Activated naive CD4-positive, alpha-beta T cell treated with anti-CD3 and anti-CD28 coated beads for 36 hours (primary cell): ENCODE measurements at regions of chr1 and their contacts with region 1.

Region 1: DNA sequence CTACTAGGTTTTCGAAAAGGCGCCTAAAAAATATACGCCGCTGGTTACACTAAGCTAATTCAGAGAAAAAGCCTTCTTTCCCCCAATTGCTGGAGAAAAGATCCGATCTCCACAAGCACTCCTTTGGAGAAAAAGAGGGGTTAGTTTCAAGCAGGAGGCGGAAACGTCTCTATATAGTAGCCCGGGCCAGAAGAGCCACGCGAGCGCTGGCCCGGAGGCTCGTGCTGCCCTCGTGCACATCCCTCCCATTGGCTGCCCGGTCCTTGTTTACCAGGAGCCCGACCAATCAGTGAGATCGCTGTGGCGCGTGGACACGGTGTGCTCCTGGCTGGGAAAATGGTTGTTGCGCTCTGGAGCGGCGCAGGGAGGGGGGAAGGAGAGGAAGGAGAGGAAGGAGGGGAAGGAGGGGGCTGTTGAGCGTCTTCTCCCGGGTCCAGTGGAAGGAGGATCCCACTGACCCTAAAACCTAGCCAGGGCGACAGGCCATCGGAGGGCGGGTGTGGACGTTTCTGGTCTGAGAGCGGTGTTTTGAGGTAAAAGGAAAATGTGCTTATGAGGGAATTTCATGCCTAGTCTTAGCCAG is at the start of gene TXNIP:
- DNase-seq: peak; percentile 97
- H3K4me3 Mint-ChIP-seq: peak within 1 kb of the TSS; percentile 88
- H3K27ac Mint-ChIP-seq: peak within 1 kb of the TSS; percentile 97
- H3K4me1 Mint-ChIP-seq: peaks cover 61% of the 10 kb centered on the region
- H3K27me3 Mint-ChIP-seq: no peaks in the 10 kb centered on the region
- total RNA-seq, gene TXNIP: 86.0 to 91.1 TPM

Region 2: GRCh38 chr1:145690624-145691035 is 305.9 kb before region 1 on chr1:
- CTCF ChIA-PET with region 1: no interaction called
- intact Hi-C with region 1: no loop called
- DNase-seq: peak; percentile 65
- H3K4me3 Mint-ChIP-seq: no peak overlapping the region
- H3K27ac Mint-ChIP-seq: no peak overlapping the region
- H3K4me1 Mint-ChIP-seq: peaks cover 22% of the 10 kb centered on the region
- H3K27me3 Mint-ChIP-seq: no peaks in the 10 kb centered on the region

Region 3: DNA sequence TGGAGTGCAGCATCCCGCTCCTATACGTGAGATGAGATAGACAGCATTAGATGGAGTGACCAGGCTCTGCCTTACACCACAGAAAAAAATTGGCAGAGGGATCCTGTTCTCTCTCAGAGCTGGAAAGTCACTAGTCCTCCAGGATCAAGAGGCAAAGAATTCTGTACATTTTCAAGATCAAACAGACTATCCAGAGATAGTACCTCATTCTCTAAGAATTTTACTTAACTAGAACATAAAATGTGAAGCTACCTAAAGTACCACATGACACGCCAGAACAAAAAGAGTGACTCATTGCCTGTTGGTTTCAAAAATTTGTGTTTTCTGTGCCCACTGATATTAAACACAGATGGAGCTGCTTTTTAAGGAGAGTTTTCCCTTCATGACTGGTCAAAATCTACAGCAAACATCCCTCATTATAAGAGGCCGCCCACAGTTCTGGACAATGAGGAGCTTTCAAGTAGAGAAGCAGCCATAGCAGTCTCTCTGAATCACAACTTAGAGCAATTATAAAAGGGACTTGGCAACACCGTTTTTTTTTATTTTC is 245.0 kb before region 1 on chr1:
- CTCF ChIA-PET with region 1: no interaction called
- intact Hi-C with region 1: no loop called
- DNase-seq: no peak
- H3K4me3 Mint-ChIP-seq: no peak overlapping the region
- H3K27ac Mint-ChIP-seq: no peak overlapping the region
- H3K4me1 Mint-ChIP-seq: peaks cover 7% of the 10 kb centered on the region
- H3K27me3 Mint-ChIP-seq: no peaks in the 10 kb centered on the region

Region 4: DNA sequence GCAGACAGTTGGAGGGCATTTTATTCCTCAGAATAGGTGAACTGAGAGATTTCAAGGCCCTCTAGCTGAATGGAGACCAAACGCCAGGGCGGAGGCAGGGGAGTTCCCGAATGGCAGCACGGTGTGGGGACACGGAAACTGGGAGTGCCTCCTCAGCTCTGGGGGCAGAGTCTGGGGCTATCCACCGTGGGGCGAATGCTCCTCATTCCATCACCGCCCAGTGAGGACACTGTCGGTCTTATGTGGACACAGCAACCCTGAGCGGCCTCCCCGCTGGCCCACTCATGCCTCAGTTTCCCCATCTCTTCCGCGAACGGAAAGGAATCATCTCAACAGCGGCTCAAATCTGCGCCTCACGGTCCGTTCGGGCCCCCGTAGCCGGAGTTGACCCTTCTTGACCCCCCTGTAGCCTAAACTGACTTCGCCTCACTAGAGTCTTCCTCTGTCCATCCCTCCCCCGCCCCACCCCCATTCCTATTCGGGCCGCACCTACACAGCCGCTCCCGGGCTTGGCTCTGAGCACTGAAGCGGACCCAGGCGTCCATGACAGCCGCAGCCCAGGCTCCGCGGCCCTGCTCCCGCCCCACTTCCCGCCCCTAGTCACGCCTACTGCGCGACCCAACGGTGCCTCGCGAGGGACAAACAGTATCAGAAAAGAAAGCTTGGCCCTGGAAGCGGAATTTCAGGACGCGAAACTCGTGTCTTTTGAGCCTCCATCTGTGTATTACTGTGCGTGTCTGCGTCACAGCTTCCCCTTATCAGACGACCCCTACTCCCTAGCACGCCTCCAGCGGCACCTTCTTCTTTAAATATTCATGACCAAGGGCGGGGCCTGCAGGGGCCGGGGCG is 78.2 kb before region 1 on chr1 and contains the start of gene PEX11B:
- CTCF ChIA-PET with region 1: interaction called, 5 read pairs
- intact Hi-C with region 1: loop called (anchors 1 kb)
- DNase-seq: peak; percentile 94
- H3K4me3 Mint-ChIP-seq: peak within 1 kb of the TSS; percentile 89
- H3K27ac Mint-ChIP-seq: peak within 1 kb of the TSS; percentile 93
- H3K4me1 Mint-ChIP-seq: peaks cover 39% of the 10 kb centered on the region
- H3K27me3 Mint-ChIP-seq: no peaks in the 10 kb centered on the region
- total RNA-seq, gene PEX11B: 18.0 to 19.0 TPM

Region 5: DNA sequence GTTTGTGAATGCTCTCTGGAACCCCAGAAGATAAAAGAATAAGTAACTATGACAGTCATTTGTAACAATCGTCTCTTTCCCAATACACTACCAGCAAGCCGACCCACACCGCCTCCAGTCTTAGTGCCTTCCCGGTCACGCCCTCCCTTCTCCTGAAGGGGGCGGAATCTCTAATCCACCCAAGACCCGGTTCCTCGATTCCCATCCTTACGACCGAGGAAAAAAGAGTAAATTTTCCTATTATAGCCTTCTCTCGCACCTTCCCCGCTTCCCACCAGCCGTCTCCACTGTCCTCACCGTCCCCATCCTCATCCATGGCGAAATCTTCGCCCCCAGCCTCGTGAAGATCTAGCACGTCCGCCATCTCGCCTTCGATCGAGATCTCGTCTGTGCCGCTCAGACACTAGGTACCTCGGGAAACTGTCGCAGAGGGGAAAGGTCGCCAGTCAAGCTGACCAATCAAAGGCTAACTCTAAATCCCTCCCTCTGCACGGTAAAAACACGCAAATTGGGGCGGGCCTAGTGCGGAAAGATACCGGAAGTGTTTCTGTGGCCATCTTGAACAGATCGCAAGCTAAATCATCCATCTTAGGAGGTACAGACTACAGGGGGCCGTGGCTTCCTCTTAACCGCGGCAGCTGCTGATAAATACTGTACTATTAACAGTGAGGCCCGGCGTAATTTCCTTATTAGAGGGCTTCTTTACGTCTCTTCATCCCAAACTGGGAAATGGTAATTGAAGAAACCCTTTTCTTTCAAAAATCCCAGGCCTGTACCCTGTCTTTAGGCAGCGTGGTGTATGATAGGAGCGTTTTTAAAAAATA is 69.2 kb before region 1 on chr1 and contains the start of gene RBM8A:
- CTCF ChIA-PET with region 1: no interaction called
- intact Hi-C with region 1: loop called (anchors 1 kb)
- DNase-seq: peak; percentile 99
- H3K4me3 Mint-ChIP-seq: no peak within 1 kb of the TSS
- H3K27ac Mint-ChIP-seq: no peak within 1 kb of the TSS
- H3K4me1 Mint-ChIP-seq: peaks cover 14% of the 10 kb centered on the region
- H3K27me3 Mint-ChIP-seq: no peaks in the 10 kb centered on the region
- total RNA-seq, gene RBM8A: 241 to 242 TPM

Region 6: DNA sequence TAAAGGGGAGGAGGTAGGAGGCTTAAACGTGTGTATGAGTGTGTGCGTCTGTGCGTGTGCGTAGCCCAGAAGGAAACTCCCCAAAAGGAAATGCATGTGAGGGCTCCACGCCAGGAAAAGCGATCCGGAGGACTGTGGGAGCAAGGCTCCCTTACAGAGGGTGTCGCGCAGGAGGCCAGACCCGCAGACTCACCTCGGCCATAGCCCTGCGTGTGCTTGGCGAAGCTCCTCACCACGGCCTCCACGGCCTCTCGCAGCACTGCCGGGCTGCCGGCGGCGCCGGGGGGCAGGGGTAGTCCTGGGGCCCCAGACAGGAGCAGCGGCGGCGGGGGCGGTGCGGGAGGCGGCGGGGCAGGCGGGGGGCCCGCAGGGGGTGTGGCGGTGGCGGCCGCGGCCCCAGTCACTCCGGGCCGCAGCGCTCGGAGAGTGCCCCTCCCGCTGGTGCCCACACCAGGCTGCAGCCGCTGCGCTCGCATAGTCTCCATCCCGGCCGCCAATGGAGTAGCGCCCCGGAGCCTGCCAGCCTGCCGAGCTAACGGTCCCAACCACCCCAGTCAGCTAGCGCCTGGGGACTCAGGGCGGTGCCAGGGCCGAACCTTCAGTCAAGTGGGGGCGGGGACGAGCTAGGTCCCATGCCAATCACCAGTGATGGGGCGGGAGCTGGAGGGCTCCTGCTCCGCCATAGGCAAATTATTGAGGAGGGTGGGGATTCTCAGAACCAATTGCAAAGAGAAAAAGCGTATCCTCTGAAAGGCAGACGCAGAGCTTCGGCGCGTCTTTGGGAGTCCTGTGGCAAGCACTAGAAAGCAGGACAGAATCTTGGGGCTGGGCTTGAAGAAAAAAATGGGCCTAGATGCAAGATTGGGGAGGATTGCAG is 38.8 kb before region 1 on chr1 and contains the start of gene LIX1L:
- CTCF ChIA-PET with region 1: interaction called, 7 read pairs
- intact Hi-C with region 1: loop called (anchors 1 kb)
- DNase-seq: peak; percentile 98
- H3K4me3 Mint-ChIP-seq: peak within 1 kb of the TSS; percentile 83
- H3K27ac Mint-ChIP-seq: peak within 1 kb of the TSS; percentile 83
- H3K4me1 Mint-ChIP-seq: peaks cover 56% of the 10 kb centered on the region
- H3K27me3 Mint-ChIP-seq: no peaks in the 10 kb centered on the region
- total RNA-seq, gene LIX1L: 43.6 to 44.3 TPM

Region 7: DNA sequence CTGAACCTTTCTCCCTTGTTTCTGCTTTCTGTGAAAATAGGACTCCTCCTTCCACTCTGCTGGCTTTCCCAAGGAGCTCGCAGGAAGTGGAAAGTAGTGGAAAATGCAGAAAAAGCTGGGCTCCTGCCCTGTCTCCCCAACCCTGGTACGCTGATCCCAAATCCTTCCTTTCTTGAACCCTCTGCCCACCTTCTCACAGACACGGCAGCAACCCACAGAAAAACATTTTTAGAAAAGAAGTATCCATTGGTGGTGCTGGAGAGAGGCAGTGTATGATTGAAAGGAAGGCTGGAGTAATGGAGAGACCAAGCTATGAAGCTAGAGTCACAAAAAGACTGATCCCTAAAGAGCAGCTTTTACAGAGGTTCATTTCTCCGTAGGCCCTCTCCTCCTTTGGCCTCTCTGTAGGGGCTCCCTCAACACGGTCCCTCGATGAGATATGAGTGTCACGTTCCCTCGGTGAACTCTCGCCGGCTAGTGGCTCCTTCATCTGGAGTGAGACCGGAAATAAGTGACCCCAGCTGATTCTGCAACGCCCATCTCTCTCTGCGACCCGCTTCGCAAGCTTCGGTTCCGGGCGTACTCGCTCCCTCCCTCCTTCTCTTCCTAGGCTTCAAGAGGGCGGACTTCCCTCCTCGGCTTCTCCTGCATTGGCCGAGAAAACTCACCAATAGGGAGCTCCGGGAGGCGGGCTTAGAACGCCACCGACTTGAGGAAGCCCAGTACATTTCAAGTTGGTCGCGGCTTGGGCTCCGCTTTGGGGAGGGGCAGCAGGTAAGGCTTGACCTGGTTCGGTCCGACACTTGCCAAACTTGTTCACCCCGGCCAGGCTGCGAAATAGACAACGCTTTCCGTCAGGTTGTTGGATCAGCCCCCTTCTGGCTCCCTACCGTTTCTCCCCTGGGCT is 32.3 kb before region 1 on chr1 and contains the starts of genes ANKRD34A and POLR3GL:
- CTCF ChIA-PET with region 1: interaction called, 7 read pairs
- intact Hi-C with region 1: loop called (anchors 1 kb)
- DNase-seq: peak; percentile 98
- H3K4me3 Mint-ChIP-seq: peak within 1 kb of the TSS; percentile 97
- H3K27ac Mint-ChIP-seq: peak within 1 kb of the TSS; percentile 84
- H3K4me1 Mint-ChIP-seq: peaks cover 35% of the 10 kb centered on the region
- H3K27me3 Mint-ChIP-seq: no peaks in the 10 kb centered on the region
- total RNA-seq, gene ANKRD34A: 3.7 to 4.3 TPM
- total RNA-seq, gene POLR3GL: 32.0 to 34.0 TPM

Region 8: GRCh38 chr1:146007506-146008133 is 11.1 kb after region 1 on chr1:
- CTCF ChIA-PET with region 1: interaction called, 21 read pairs
- intact Hi-C with region 1: loop called (anchors 1 kb)
- DNase-seq: no peak
- H3K4me3 Mint-ChIP-seq: no peak overlapping the region
- H3K27ac Mint-ChIP-seq: peak overlapping the region; percentile 93
- H3K4me1 Mint-ChIP-seq: peaks cover 38% of the 10 kb centered on the region
- H3K27me3 Mint-ChIP-seq: no peaks in the 10 kb centered on the region

Region 9: DNA sequence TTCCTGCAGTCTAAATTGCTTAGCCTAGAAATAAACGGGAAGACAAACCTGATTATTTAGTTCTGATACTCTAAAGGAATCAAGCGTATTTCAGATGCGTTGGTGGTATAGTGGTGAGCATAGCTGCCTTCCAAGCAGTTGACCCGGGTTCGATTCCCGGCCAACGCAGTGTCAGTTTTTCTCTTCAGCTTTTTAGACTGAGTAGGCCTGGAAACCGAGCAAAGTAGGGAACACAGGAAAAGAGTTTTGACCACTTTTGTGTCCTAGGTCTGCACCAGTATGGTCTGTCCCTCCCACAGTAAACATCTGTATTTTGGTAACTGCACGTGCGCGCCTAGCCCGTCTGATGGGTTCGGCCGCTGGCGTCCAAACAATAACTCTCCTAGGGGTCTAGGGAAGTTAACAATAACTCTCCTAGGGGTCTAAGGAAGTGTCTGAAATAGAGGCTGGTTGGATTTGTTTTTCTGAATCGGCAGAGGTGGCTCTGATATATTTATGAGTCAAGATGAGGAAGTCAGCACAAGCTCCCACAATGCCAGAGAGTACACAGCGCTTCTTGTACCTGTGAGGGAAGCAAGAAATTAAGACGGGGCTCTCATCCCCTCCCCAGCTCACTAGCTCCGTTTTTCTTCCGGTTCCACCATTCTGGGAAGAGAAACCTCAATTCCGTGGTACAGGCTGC is 40.6 kb after region 1 on chr1:
- CTCF ChIA-PET with region 1: interaction called, 3 read pairs
- intact Hi-C with region 1: loop called (anchors 1 kb)
- DNase-seq: peak; percentile 89
- H3K4me3 Mint-ChIP-seq: peak overlapping the region; percentile 99
- H3K27ac Mint-ChIP-seq: peak overlapping the region; percentile 99
- H3K4me1 Mint-ChIP-seq: peaks cover 37% of the 10 kb centered on the region
- H3K27me3 Mint-ChIP-seq: peaks cover 9% of the 10 kb centered on the region